SK-N-SH (cell line): ENCODE measurements at regions of chr1 and their contacts with region 1.

Region 1: GRCh38 chr1:222557148-222557547 is 9.2 kb upstream of the HHIPL2 start:
- DNase-seq: no peak
- H3K4me3 ChIP-seq: no peak overlapping the region
- H3K27ac ChIP-seq: no peak overlapping the region
- H3K4me1 ChIP-seq: no peaks in the 10 kb centered on the region
- H3K27me3 ChIP-seq: no peaks in the 10 kb centered on the region
- CTCF ChIP-seq: no peak
- EP300 ChIP-seq: no peak
- RAD21 ChIP-seq: no peak

Region 2: GRCh38 chr1:222546548-222547259 is 10.4 kb before region 1 on chr1:
- CTCF ChIA-PET with region 1: interaction called, 10 read pairs
- POLR2A ChIA-PET with region 1: interaction called, 4 read pairs
- DNase-seq: peak; percentile 66
- H3K4me3 ChIP-seq: peak overlapping the region in 1 of 2 experiments; percentile 16; a peak in 1 of 4 replicates
- H3K27ac ChIP-seq: peak overlapping the region; percentile 30 to 36; a peak in 3 of 4 replicates
- H3K4me1 ChIP-seq: peaks cover 0 to 19% of the 10 kb centered on the region in 2 experiments; a peak in 1 of 4 replicates
- H3K27me3 ChIP-seq: no peaks in the 10 kb centered on the region
- CTCF ChIP-seq: no peak
- EP300 ChIP-seq: peak in 1 of 2 experiments; percentile 5; a peak in 1 of 4 replicates
- RAD21 ChIP-seq: no peak

Region 3: DNA sequence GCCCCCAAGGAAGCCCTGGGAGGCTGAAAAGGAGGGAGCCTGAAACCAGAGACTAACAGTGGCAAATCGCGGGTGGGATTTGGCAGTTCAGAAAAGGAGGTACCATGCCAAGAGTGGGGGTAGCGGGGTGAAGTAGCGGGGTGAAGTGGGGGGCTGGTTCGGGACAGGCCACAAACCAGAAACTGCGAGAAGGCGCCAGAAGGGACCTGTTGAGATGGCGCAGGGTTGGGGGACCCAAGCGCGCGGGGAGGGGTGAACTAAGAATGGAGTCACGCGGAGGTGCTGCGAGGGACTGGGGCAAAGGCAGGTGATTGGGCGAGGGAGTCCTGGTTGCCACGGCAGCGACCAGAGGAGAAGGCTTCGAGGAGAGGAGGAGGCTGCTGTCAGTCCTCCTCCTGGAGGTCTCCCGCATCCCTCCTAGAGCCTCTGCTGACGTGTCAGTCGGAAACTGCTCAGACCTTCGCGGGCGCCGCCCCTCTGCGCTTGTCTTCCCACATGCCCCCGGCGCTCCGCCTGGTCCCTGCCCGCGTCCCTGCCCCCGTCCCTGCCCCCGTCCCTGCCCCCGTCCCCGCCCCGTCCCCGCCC is 60.3 kb after region 1 on chr1:
- CTCF ChIA-PET with region 1: no interaction called
- POLR2A ChIA-PET with region 1: no interaction called
- DNase-seq: no peak
- H3K4me3 ChIP-seq: peak overlapping the region; percentile 56 to 59
- H3K27ac ChIP-seq: peak overlapping the region; percentile 53 to 73
- H3K4me1 ChIP-seq: peaks cover 5 to 10% of the 10 kb centered on the region in 2 experiments; a peak in 2 of 4 replicates
- H3K27me3 ChIP-seq: no peaks in the 10 kb centered on the region
- CTCF ChIP-seq: no peak
- EP300 ChIP-seq: peak in 1 of 2 experiments; percentile 4; a peak in 1 of 4 replicates
- RAD21 ChIP-seq: no peak

Region 4: DNA sequence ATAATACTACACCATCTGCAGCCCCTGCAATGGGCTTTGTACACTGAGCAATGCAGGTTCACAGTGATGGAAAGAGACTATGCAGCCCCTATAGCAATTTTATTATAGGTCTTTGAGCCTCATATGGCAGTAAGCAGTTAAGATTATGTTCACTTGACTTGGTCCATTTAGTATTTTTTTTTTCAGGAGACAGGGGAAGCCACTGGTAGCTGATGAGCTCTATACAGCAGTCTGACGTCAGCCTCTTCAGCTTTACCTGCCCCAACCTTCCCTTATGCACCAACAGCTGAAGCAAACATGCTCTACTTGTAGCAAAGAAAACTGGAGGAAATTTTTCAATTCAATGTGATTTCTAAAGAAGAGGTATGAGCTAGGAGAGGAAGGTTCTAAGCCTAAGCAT is 122.9 kb after region 1 on chr1:
- CTCF ChIA-PET with region 1: no interaction called
- POLR2A ChIA-PET with region 1: no interaction called
- DNase-seq: no peak
- H3K4me3 ChIP-seq: no peak overlapping the region
- H3K27ac ChIP-seq: no peak overlapping the region
- H3K4me1 ChIP-seq: no peaks in the 10 kb centered on the region
- H3K27me3 ChIP-seq: no peaks in the 10 kb centered on the region
- CTCF ChIP-seq: no peak
- EP300 ChIP-seq: no peak
- RAD21 ChIP-seq: no peak